Endothelial cell of umbilical vein (primary cell): ENCODE measurements at regions of chr10 and their contacts with region 1.

Region 1: DNA sequence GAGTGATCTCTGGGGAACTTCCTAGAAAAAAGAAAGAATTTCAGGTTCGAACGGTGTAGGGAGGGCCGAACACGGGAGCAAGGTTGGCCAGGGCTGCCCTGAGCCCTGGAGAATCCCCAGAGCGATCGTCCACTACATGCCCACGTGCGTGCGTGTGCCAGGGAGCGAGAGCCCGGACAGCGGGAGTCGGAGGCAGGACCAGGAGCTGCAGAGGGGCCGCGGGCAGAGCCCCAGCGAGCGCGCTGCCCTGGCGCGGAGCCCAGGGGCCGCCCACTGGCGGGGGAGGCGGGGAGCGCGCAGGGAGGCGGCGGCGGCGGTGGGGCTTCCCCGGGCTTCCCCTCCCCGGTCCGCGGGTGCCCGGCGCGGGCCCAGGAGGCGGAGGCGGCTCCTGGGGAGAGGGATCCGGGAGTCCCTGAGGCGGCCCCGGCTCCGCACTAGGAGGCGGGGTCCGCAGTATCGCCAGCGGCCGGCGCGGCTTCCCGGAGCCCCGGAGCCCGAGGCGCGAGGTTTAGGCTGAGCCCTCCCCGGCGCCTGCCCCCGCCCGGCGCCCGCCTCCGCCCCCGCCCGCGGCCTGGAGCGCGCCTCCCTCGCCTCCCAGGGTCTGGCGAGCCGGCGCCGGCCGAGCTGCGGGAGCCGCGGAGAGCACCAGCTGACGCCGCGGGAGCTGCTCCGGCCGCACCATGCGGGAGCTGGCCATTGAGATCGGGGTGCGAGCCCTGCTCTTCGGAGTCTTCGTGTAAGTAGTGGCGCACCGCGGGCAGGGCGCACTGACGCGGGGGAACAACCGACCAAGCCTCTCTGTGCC is at the start of gene PLPP4:
- DNase-seq: peak; percentile 72
- H3K4me3 ChIP-seq: peak within 1 kb of the TSS; percentile 33 to 58 (median 50)
- H3K27ac ChIP-seq: peak within 1 kb of the TSS; percentile 67
- H3K4me1 ChIP-seq: peaks cover 45% of the 10 kb centered on the region
- H3K27me3 ChIP-seq: peaks cover 0 to 3% of the 10 kb centered on the region in 2 experiments
- CTCF ChIP-seq: no peak
- POLR2A ChIP-seq: peak; percentile 49
- total RNA-seq, gene PLPP4: 15.5 and 17.1 TPM in 2 replicates

Region 2: DNA sequence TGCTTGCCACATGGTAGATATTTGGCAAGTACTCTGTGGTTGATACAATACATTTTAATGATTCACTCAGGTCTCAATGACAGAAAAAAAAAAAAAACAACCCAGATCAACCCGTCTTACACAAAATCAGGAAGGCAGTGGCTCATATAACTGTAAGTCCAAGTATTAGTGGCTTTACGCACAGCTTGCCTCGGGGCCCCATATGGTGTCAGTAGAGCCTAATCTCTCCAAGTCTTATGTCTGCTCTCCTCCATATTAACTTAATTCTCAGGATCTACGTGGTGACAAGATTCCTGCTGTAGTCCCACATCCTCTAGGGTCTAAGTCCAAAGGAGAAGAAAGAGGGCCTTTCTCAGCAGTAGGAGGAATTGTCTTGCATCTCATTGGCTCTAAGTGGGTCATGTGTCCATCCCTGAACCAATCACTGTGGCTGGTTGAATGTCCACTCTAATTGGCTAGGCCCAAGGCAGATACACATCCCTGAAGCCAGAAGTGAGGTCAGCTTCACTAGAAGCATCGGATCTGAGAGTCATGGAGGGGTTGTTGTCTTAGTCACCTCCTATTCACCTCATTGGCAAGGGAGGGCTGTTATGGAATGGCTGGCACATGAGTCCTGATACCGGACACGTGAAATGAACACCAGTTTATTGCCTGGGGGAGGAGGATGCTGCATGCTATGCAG is 20.3 kb before region 1 on chr10:
- CTCF ChIA-PET with region 1: interaction called, 10 read pairs
- POLR2A ChIA-PET with region 1: no interaction called
- dilution Hi-C with region 1: no loop called
- intact Hi-C with region 1: no loop called
- DNase-seq: no peak
- H3K4me3 ChIP-seq: no peak overlapping the region
- H3K27ac ChIP-seq: no peak overlapping the region
- H3K4me1 ChIP-seq: no peaks in the 10 kb centered on the region
- H3K27me3 ChIP-seq: no peaks in the 10 kb centered on the region
- CTCF ChIP-seq: no peak
- POLR2A ChIP-seq: no peak

Region 3: GRCh38 chr10:120613180-120613579 is 156.4 kb after region 1 on chr10:
- CTCF ChIA-PET with region 1: no interaction called
- POLR2A ChIA-PET with region 1: no interaction called
- dilution Hi-C with region 1: no loop called
- intact Hi-C with region 1: loop called (anchors 1 kb)
- DNase-seq: peak; percentile 84
- H3K4me3 ChIP-seq: no peak overlapping the region
- H3K27ac ChIP-seq: peak overlapping the region; percentile 92
- H3K4me1 ChIP-seq: peaks cover 40% of the 10 kb centered on the region
- H3K27me3 ChIP-seq: no peaks in the 10 kb centered on the region
- CTCF ChIP-seq: no peak
- POLR2A ChIP-seq: no peak

Region 4: GRCh38 chr10:120850911-120851865 is 394.4 kb after region 1 on chr10 and contains the start of gene WDR11:
- CTCF ChIA-PET with region 1: no interaction called
- POLR2A ChIA-PET with region 1: no interaction called
- dilution Hi-C with region 1: no loop called
- intact Hi-C with region 1: loop called (anchors 2 kb)
- DNase-seq: peak; percentile 88
- H3K4me3 ChIP-seq: peak within 1 kb of the TSS; percentile 42 to 92 (median 87)
- H3K27ac ChIP-seq: peak within 1 kb of the TSS; percentile 64
- H3K4me1 ChIP-seq: peaks cover 11% of the 10 kb centered on the region
- H3K27me3 ChIP-seq: no peaks in the 10 kb centered on the region
- CTCF ChIP-seq: no peak
- POLR2A ChIP-seq: peak; percentile 95
- total RNA-seq, gene WDR11: 58.9 and 73.9 TPM in 2 replicates